OCI-LY7 (cell line): ENCODE measurements at regions of chr2 and their contacts with region 1.

Region 1: DNA sequence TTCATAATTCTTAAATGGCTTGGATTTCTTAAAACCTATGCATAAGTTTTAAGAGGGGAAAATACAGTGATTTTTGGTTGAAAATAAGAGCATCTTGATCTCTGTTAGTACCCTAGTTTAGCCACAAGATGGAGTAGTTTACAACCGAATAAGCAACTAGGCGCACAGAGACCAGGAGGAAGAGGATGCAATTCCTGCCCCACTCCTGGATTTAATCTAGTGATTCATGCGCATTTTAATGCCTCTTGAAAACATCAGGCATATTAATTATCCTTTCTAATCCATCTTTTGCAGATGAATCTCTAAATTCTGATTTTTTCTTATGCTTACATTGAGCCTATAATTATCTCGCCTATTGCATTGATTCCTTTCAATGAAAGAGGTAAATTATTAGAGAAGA is 76.7 kb downstream of the MRPS9 start:
- DNase-seq: peak; percentile 64
- H3K4me3 ChIP-seq: no peak overlapping the region
- H3K27ac ChIP-seq: no peak overlapping the region
- H3K4me1 ChIP-seq: no peaks in the 10 kb centered on the region
- CTCF ChIP-seq: peak; percentile 91

Region 2: GRCh38 chr2:105238664-105239240 is 124.2 kb after region 1 on chr2:
- CTCF ChIA-PET with region 1: interaction called, 3 read pairs
- POLR2A ChIA-PET with region 1: interaction called, 3 read pairs
- intact Hi-C with region 1: loop called (anchors 1 kb)
- DNase-seq: no peak
- H3K4me3 ChIP-seq: no peak overlapping the region
- H3K27ac ChIP-seq: no peak overlapping the region
- H3K4me1 ChIP-seq: no peaks in the 10 kb centered on the region
- CTCF ChIP-seq: no peak